Left lung (tissue), 14 donors: ENCODE measurements at regions of chr2 and their contacts with region 1.

Region 1: DNA sequence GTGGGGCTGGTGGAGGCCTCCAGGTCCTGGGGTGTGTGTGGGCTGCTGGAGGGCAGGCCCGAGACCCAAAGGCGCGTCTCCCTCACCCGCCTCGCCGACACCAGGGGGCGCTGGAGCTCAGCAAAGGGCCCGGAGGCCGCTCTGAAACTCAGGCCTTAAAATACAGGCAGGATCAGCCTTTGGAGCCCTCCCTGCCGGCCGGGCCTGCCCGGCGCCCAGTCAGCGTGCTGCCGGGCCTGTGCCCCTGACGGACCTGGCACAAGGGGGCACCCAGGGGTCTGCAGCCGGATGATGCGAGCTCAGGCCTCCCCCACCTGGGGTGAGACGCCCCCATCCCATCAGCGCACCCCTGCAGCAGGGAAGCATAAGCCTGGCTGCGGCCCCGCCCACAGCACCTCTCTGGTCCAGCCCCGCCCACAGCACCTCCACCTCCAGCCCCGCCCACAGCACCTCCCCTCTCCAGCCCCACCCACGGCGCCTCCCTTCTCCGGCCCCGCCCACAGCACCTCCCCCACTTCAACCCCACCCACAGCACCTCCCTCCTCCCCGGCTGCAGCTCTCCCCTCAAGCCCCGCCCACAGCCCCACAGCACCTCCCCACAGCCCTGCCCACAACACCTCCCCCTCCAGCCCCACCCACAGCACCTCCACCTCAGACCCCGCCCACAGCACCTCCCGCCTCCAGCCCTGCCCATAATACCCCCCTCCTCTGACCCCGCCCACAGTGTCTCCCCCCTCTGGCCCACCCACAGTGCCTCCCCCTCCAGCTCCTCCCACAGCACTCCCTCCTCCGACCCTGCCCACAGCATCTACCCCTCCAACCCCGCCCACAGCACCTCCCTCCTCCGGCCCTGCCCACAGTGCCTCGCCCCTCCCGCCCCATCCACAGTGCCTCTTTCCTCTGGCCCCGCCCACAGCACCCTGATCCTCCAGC is 92.8 kb upstream of the OTOS start:
- DNase-seq: peak; percentile 68 to 93 (median 86)
- ATAC-seq: peak; percentile 89
- H3K4me3 ChIP-seq: peak overlapping the region in 1 of 2 donors; percentile 25
- H3K27ac ChIP-seq: no peak overlapping the region
- H3K4me1 ChIP-seq: peaks cover 0 to 4% of the 10 kb centered on the region in 2 donors
- H3K27me3 ChIP-seq: peaks cover 0 to 12% of the 10 kb centered on the region in 2 donors
- CTCF ChIP-seq: peak; percentile 81 to 83

Region 2: GRCh38 chr2:240355001-240355976 is 122.1 kb after region 1 on chr2:
- intact Hi-C with region 1: no loop called
- DNase-seq: peak in 1 of 4 donors; percentile 61
- ATAC-seq: no peak
- H3K4me3 ChIP-seq: no peak overlapping the region
- H3K27ac ChIP-seq: no peak overlapping the region
- H3K4me1 ChIP-seq: no peaks in the 10 kb centered on the region
- H3K27me3 ChIP-seq: peaks cover 0 to 17% of the 10 kb centered on the region in 2 donors
- CTCF ChIP-seq: no peak

Region 3: GRCh38 chr2:240434728-240435456 is 201.7 kb after region 1 on chr2:
- intact Hi-C with region 1: loop called in 1 of 2 experiments (anchors 5 kb)
- DNase-seq: peak; percentile 91 to 96 (median 92)
- ATAC-seq: peak; percentile 85
- H3K4me3 ChIP-seq: peak overlapping the region; percentile 36 to 59
- H3K27ac ChIP-seq: peak overlapping the region; percentile 70 to 75
- H3K4me1 ChIP-seq: peaks cover 21 to 25% of the 10 kb centered on the region in 2 donors
- H3K27me3 ChIP-seq: peaks cover 3 to 88% of the 10 kb centered on the region in 2 donors
- CTCF ChIP-seq: no peak

Region 4: DNA sequence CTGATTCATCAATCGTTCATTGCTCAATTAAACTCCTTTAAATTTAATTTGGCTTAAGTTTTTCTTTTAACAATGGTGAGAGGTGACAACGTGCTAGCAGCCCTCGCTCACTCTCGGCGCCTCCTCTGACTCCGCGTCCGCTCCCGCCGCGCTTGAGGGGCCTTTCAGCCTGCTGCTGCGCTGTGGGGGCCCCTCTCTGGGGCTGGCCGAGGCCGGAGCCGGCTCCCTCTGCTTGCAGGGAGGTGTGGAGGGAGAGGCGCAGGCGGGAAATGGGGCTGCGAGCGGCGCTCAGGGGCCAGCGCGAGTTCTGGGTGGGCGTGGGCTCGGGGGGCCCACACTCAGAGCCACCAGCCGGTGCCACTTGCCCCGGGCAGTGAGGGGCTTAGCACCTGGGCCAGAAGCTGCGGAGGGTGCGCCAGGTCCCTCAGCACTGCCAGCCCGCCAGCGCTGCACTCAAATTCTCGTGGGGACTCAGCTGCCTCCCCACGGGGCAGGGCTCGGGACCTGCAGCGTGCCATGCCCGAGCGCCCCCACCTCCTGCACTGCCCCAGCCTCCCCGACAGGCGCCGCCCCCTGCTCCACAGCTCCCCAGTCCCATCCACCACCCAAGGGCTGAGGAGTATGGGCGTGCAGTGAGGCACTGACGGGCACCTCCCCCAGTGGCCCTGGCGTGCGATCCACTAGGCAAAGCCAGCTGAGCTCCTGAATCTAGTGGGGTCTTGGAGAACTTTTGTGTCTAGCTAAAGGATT is 305.0 kb after region 1 on chr2:
- intact Hi-C with region 1: no loop called
- DNase-seq: no peak
- ATAC-seq: no peak
- H3K4me3 ChIP-seq: no peak overlapping the region
- H3K27ac ChIP-seq: no peak overlapping the region
- H3K4me1 ChIP-seq: no peaks in the 10 kb centered on the region
- H3K27me3 ChIP-seq: no peaks in the 10 kb centered on the region
- CTCF ChIP-seq: no peak